Activated naive CD4-positive, alpha-beta T cell treated with anti-CD3 and anti-CD28 coated beads for 36 hours (primary cell): ENCODE measurements at regions of chr17 and their contacts with region 1.

Region 1: DNA sequence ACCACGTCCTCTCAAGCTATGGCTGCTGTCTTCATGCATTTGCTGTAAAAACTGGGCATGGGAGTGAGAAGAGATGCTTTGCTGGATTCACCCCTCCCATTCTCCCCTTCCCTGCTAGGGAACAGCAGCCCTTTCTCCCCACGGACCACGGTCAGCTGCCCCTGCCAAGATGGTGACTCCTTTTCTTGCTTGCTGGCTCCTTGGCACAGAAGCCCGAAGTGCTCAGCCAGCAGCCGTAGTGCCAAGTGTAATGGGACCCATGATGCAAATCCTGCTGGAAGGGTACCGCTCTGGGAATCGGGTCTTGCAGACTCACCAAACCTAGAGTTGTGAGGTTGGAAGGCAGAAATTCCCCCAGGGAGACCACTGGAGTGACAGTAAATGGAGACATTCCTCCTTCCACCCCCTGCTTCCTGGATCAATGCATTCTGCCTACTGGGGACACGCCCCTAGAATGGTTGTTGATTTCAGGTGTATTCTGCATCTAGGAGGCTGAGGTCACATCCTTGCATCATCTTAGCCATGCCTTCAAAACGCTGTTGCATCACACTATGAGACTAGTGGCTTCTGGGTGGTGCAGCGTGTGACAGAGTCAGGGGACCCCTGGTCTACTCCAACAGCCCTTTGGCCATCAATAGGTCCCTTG is 63.0 kb upstream of the CBX4 start:
- DNase-seq: no peak
- H3K4me3 Mint-ChIP-seq: no peak overlapping the region
- H3K27ac Mint-ChIP-seq: no peak overlapping the region
- H3K4me1 Mint-ChIP-seq: no peaks in the 10 kb centered on the region
- H3K27me3 Mint-ChIP-seq: no peaks in the 10 kb centered on the region

Region 2: GRCh38 chr17:79612468-79613194 is 289.6 kb before region 1 on chr17:
- CTCF ChIA-PET with region 1: no interaction called
- intact Hi-C with region 1: no loop called
- DNase-seq: peak; percentile 75
- H3K4me3 Mint-ChIP-seq: no peak overlapping the region
- H3K27ac Mint-ChIP-seq: no peak overlapping the region
- H3K4me1 Mint-ChIP-seq: peaks cover 2% of the 10 kb centered on the region
- H3K27me3 Mint-ChIP-seq: peaks cover 31% of the 10 kb centered on the region

Region 3: DNA sequence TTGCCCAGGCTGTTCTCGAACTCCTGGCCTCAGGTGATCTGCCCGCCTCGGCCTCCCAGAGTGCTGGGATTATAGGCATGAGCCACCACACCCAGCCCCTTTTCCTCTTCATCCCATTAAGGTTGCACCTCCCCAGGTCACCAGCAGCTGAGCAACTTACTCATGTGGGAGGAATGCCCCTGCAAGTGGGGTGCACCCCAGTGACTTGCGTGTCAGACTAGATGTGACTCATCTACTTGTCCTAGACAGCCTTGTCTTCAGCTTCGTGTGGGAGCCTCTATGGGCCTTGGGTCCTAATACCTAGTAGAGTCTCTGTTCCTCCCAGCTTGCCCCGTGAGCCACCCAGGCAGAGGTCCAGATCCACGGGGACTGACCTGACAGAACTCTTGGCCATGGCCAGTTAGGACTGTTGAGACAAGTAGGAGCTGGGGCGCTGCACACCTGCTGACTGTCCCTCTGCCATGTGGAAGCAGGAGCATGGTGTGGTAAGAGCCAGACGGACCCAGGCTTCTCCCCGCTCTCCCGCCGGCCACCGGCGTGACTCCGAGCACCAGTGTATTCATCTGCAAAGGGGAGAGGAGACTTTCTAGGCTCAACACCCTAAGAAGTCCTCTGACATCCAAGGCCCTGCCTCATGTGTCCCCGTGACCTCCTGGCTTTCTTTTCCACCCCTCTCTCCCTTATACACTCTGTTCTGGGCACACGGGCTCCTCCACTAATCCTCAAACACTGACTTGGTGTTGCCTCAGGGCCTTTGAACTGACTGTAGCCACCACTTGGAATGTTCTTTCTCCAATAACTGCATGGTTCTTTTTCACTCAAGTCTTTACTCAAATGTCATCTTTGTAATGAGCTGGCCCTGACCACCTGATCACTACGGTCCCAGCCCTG is 51.5 kb before region 1 on chr17:
- CTCF ChIA-PET with region 1: no interaction called
- intact Hi-C with region 1: loop called (anchors 5 kb)
- DNase-seq: peak; percentile 68
- H3K4me3 Mint-ChIP-seq: no peak overlapping the region
- H3K27ac Mint-ChIP-seq: no peak overlapping the region
- H3K4me1 Mint-ChIP-seq: peaks cover 4% of the 10 kb centered on the region
- H3K27me3 Mint-ChIP-seq: peaks cover 8% of the 10 kb centered on the region

Region 4: GRCh38 chr17:80012765-80013741 is 110.8 kb after region 1 on chr17:
- CTCF ChIA-PET with region 1: no interaction called
- intact Hi-C with region 1: no loop called
- DNase-seq: no peak
- H3K4me3 Mint-ChIP-seq: no peak overlapping the region
- H3K27ac Mint-ChIP-seq: no peak overlapping the region
- H3K4me1 Mint-ChIP-seq: no peaks in the 10 kb centered on the region
- H3K27me3 Mint-ChIP-seq: no peaks in the 10 kb centered on the region